ENCODE measurements at regions of chr12 and their contacts with region 1.

Region 1: DNA sequence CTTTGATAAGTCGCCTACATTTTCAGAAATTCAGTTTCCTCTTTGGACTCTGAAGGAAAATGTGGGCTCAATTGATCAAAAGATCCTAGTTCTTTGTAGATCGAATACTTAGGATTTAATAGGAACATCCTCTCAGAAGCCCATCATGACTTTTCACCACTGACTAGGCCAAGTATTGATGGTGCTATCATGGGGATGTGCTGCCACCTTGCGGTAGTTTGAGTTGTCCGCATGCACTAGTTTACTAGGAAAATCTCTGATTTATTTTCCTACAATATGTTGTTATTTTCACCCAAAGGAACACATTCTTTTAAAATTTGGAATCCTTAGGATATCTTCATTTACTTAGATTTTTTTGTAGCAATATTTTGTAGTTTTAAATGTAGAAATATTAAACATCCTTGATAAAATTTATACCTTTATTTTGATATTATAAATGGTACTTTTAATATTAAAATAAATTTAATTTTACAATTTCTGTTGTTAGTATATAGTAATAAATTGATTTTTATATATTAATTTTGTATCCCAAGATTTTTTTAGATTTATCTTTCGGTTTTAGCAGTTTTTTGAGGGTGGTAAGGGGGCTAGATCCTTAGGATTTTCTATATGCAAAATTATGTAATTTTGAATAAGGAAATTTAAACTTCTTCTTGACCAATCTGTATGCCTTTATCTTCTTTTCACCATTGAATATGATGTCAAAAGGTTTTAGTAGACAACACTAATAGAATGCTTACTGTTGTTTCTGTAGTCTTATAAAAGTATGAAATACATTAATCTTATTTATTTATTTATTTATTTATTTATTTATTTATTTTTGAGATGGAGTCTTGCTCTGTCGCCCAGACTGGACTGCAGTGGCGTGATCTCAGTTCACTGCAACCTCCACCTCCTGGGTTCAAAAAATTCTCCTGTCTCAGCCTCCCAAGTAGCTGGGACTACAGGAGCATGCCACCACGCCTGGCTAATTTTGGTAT is 52.9 kb upstream of the OR9K2 start:
- DNase-seq: peak; percentile 85 to 92 (median 86)
- H3K4me3 ChIP-seq: no peak overlapping the region
- H3K27ac ChIP-seq: no peak overlapping the region
- H3K4me1 ChIP-seq: peaks cover 0 to 13% (median 5%) of the 10 kb centered on the region in 4 experiments
- H3K27me3 ChIP-seq: no peaks in the 10 kb centered on the region

Region 2: GRCh38 chr12:54359033-54359761 is 714.1 kb before region 1 on chr12:
- CTCF ChIA-PET with region 1: no interaction called
- POLR2A ChIA-PET with region 1: no interaction called
- DNase-seq: peak; percentile 99
- H3K4me3 ChIP-seq: peak overlapping the region; percentile 56 to 78 (median 74)
- H3K27ac ChIP-seq: peak overlapping the region; percentile 51 to 90
- H3K4me1 ChIP-seq: peaks cover 13 to 62% (median 53%) of the 10 kb centered on the region in 4 experiments
- H3K27me3 ChIP-seq: no peaks in the 10 kb centered on the region

Region 3: GRCh38 chr12:54723379-54724256 is 349.7 kb before region 1 on chr12:
- CTCF ChIA-PET with region 1: interaction called, 12 read pairs
- POLR2A ChIA-PET with region 1: no interaction called
- DNase-seq: peak; percentile 46 to 73 (median 65)
- H3K4me3 ChIP-seq: no peak overlapping the region
- H3K27ac ChIP-seq: no peak overlapping the region
- H3K4me1 ChIP-seq: no peaks in the 10 kb centered on the region
- H3K27me3 ChIP-seq: peaks cover 0 to 5% (median 0%) of the 10 kb centered on the region in 5 experiments

Region 4: DNA sequence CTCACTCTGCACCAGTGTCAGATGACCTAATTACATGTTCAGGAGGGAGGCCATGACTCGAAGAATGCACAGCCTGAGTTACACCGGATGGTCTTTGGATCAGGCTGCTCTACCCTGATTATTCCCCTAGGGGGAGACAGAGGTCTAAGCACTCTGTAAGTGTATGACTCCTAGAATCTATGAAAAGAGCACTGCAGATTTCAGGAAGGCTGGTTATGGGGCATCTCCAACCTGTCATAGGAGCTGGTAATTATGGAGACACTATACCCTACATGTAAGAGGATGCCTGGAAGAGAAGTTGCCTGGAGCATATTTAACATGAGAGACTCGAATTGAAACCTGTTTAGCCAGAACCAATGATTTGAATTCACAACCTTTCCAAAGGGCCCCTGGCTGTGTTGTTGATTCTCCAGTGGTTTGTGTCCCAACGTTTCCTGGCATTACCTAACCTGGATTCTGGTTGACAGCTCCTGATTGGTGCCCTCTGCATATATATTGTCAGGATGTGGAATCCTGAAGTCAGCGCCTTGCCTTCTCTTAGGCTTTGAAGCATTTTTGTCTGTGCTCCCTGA is 219.3 kb before region 1 on chr12 and contains the start of gene MUCL1:
- CTCF ChIA-PET with region 1: interaction called, 15 read pairs
- POLR2A ChIA-PET with region 1: no interaction called
- DNase-seq: peak; percentile 71 to 83 (median 74)
- H3K4me3 ChIP-seq: no peak within 1 kb of the TSS
- H3K27ac ChIP-seq: no peak within 1 kb of the TSS
- H3K4me1 ChIP-seq: no peaks in the 10 kb centered on the region
- H3K27me3 ChIP-seq: no peaks in the 10 kb centered on the region

Region 5: DNA sequence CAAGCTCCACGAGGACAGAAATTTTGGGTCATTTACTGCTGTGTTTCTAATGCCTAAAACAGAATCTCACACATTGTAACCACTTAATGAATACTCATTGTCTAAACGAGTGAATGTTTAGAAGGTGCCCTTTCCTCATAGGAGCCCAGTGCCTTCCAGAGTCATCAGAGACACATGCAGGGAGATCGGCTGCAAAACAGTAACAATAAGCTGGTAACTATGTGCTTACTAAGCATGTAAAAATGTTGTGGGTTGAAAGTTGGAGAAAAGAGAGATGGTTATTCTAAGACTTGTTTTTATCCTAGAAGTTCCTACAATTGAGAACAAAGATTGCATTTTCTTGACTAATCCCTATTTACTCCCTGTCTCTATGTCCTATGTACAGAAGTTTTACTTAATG is 96.2 kb before region 1 on chr12:
- CTCF ChIA-PET with region 1: interaction called, 21 read pairs
- POLR2A ChIA-PET with region 1: no interaction called
- DNase-seq: no peak
- H3K4me3 ChIP-seq: peak overlapping the region in 3 of 7 experiments; percentile 24 to 65 (median 57)
- H3K27ac ChIP-seq: peak overlapping the region in 1 of 2 experiments; percentile 73
- H3K4me1 ChIP-seq: peaks cover 40 to 94% (median 64%) of the 10 kb centered on the region in 4 experiments
- H3K27me3 ChIP-seq: no peaks in the 10 kb centered on the region

Region 6: GRCh38 chr12:55019779-55020178 is 53.6 kb before region 1 on chr12 and contains the start of gene NEUROD4:
- CTCF ChIA-PET with region 1: interaction called, 10 read pairs
- POLR2A ChIA-PET with region 1: no interaction called
- DNase-seq: peak; percentile 36 to 73 (median 70)
- H3K4me3 ChIP-seq: no peak within 1 kb of the TSS
- H3K27ac ChIP-seq: no peak within 1 kb of the TSS
- H3K4me1 ChIP-seq: no peaks in the 10 kb centered on the region
- H3K27me3 ChIP-seq: peaks cover 10 to 59% (median 38%) of the 10 kb centered on the region in 5 experiments

Region 7: DNA sequence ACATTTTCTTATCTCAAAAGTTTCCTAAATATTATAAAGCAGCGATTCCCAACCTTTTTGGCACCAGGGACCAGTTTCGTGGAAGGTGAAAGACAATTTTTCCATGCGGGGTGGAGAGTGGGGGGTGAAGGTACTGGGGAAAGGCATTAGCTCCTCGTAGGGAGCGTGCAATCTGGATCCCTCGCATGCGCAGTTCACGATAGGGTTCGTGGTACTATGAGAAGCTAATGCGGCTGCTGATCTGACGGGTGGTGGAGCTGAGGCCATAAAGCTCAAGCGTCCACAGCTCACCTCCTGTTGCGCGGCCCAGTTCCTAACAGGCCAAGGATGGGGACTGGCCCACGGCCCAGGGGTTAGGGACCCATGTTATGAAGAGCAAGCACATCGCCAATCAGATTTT is 23.7 kb before region 1 on chr12:
- CTCF ChIA-PET with region 1: interaction called, 12 read pairs
- POLR2A ChIA-PET with region 1: no interaction called
- DNase-seq: no peak
- H3K4me3 ChIP-seq: no peak overlapping the region
- H3K27ac ChIP-seq: no peak overlapping the region
- H3K4me1 ChIP-seq: no peaks in the 10 kb centered on the region
- H3K27me3 ChIP-seq: peaks cover 0 to 2% (median 0%) of the 10 kb centered on the region in 5 experiments

Measured in common myeloid progenitor, CD34-positive (primary cell).